ENCODE measurements at regions of chr2 and their contacts with region 1.

Region 1: DNA sequence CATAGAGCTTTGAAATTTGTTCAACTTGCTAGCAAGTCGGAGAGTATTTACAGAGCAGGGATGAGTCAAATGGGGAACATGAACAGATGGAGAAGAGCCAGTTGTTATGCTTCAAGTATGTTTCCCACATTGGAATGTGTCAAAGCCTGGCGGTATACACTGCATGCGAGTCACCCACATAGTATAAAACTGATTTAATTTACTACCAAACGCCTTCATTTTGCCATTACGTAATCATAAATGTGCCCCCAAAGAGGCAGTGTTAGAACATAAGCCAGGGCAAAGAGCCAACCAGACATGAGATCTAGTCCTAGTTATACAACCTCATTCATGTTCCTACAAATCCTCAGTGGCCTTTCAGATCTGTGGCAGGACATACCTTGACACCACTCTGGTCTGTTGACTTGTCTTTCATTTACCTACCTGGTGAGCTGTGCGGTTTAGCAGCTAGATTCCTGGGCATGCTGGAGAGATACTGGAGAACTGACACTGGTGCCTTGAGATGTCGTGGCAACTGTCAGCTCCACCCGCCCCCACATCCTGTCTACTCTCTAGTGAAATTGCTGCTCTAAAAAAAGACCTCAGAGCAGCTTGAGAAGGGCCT is 21.7 kb upstream of the NRP2 start:
- DNase-seq: peak; percentile 13
- H3K4me3 ChIP-seq: no peak overlapping the region
- H3K27ac ChIP-seq: peak overlapping the region in 2 of 4 donors; percentile 2 to 30
- H3K4me1 ChIP-seq: peaks cover 0 to 8% (median 2%) of the 10 kb centered on the region in 4 donors
- H3K27me3 ChIP-seq: no peaks in the 10 kb centered on the region
- CTCF ChIP-seq: no peak
- EP300 ChIP-seq: no peak
- POLR2A ChIP-seq: no peak

Region 2: DNA sequence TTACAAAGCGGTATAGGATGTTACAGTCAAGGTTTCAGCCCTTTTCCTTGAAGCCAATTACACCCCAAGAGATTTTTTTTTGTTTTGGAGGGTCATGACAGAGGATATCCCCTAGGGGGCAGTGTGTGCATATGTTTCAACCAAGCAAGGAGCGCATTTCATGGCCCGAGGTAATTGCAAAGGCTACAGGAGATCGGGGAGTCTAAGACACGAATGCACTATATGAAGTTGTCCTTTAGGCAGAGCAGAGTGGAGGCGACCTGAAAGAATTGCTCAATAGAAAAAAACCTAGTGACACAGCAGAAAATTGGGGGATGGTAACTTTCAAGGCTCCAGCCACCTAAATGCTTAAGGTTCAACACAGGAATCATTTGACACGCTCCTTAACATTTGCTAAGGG is 1335.2 kb before region 1 on chr2:
- in situ Hi-C with region 1: loop called in 1 of 4 experiments (anchors 25 kb)
- intact Hi-C with region 1: no loop called
- DNase-seq: peak; percentile 62
- H3K4me3 ChIP-seq: no peak overlapping the region
- H3K27ac ChIP-seq: no peak overlapping the region
- H3K4me1 ChIP-seq: peaks cover 0 to 4% (median 0%) of the 10 kb centered on the region in 4 donors
- H3K27me3 ChIP-seq: no peaks in the 10 kb centered on the region
- CTCF ChIP-seq: peak; percentile 82 to 96 (median 90)
- EP300 ChIP-seq: no peak
- POLR2A ChIP-seq: no peak

Region 3: GRCh38 chr2:204705243-204705932 is 955.2 kb before region 1 on chr2:
- in situ Hi-C with region 1: loop called in 1 of 4 experiments (anchors 25 kb)
- intact Hi-C with region 1: no loop called
- DNase-seq: no peak
- H3K4me3 ChIP-seq: no peak overlapping the region
- H3K27ac ChIP-seq: no peak overlapping the region
- H3K4me1 ChIP-seq: peaks cover 0 to 23% (median 2%) of the 10 kb centered on the region in 4 donors
- H3K27me3 ChIP-seq: no peaks in the 10 kb centered on the region
- CTCF ChIP-seq: no peak
- EP300 ChIP-seq: no peak
- POLR2A ChIP-seq: no peak

Region 4: GRCh38 chr2:204871231-204871953 is 789.2 kb before region 1 on chr2:
- in situ Hi-C with region 1: loop called in 1 of 4 experiments (anchors 25 kb)
- intact Hi-C with region 1: no loop called
- DNase-seq: no peak
- H3K4me3 ChIP-seq: no peak overlapping the region
- H3K27ac ChIP-seq: no peak overlapping the region
- H3K4me1 ChIP-seq: peaks cover 0 to 26% (median 4%) of the 10 kb centered on the region in 4 donors
- H3K27me3 ChIP-seq: no peaks in the 10 kb centered on the region
- CTCF ChIP-seq: peak in 3 of 5 experiments; percentile 18 to 23 (median 20)
- EP300 ChIP-seq: no peak
- POLR2A ChIP-seq: no peak

Region 5: DNA sequence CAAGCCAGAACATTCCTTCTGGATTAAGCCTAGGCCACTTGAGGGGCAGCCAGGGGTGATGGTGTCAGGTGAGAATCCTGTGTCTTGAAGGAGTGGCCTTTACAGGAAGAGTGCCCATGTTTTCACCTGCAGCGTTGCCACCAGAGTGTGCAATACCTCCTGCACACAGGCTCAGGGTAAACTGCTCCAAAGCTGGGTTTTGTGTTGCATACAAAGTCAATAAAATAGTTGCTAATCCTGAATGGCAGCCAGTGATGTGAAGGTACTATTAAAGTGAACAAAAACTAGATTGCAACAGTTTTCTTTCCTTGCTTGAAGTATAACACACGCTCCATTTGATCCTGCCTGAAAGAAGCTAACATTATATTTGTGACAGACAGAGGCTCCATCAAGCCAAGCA is 42.7 kb before region 1 on chr2:
- in situ Hi-C with region 1: no loop called
- intact Hi-C with region 1: no loop called
- DNase-seq: no peak
- H3K4me3 ChIP-seq: no peak overlapping the region
- H3K27ac ChIP-seq: no peak overlapping the region
- H3K4me1 ChIP-seq: peaks cover 0 to 7% (median 4%) of the 10 kb centered on the region in 4 donors
- H3K27me3 ChIP-seq: no peaks in the 10 kb centered on the region
- CTCF ChIP-seq: no peak
- EP300 ChIP-seq: no peak
- POLR2A ChIP-seq: no peak

Region 6: GRCh38 chr2:205748639-205749477 is 88.2 kb after region 1 on chr2:
- in situ Hi-C with region 1: no loop called
- intact Hi-C with region 1: no loop called
- DNase-seq: no peak
- H3K4me3 ChIP-seq: no peak overlapping the region
- H3K27ac ChIP-seq: peak overlapping the region; percentile 33 to 70 (median 53)
- H3K4me1 ChIP-seq: peaks cover 8 to 33% (median 11%) of the 10 kb centered on the region in 4 donors
- H3K27me3 ChIP-seq: no peaks in the 10 kb centered on the region
- CTCF ChIP-seq: no peak
- EP300 ChIP-seq: no peak
- POLR2A ChIP-seq: no peak

Region 7: DNA sequence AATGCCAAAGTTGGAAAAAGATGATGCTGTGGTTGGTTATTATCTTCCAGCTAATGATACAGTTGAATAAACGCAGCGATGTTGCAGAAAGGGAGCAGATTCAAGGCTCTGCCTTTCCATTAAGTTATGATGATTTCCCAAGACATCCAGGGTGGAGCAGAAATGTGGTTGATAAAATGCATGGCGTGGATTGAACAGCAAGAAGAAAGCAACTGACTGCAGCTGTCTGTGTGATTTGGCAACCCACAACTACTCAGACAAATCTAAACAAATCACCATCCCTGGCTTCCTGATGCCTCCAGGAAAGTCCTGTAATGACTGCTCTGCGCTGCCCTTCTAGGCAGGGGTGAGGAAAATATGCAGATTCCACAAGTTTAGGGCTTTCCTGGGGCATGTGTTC is 188.0 kb after region 1 on chr2:
- in situ Hi-C with region 1: no loop called
- intact Hi-C with region 1: no loop called
- DNase-seq: no peak
- H3K4me3 ChIP-seq: no peak overlapping the region
- H3K27ac ChIP-seq: no peak overlapping the region
- H3K4me1 ChIP-seq: no peaks in the 10 kb centered on the region
- H3K27me3 ChIP-seq: no peaks in the 10 kb centered on the region
- CTCF ChIP-seq: no peak
- EP300 ChIP-seq: no peak
- POLR2A ChIP-seq: no peak